ENCODE measurements at regions of chr6 and their contacts with region 1.

Region 1: DNA sequence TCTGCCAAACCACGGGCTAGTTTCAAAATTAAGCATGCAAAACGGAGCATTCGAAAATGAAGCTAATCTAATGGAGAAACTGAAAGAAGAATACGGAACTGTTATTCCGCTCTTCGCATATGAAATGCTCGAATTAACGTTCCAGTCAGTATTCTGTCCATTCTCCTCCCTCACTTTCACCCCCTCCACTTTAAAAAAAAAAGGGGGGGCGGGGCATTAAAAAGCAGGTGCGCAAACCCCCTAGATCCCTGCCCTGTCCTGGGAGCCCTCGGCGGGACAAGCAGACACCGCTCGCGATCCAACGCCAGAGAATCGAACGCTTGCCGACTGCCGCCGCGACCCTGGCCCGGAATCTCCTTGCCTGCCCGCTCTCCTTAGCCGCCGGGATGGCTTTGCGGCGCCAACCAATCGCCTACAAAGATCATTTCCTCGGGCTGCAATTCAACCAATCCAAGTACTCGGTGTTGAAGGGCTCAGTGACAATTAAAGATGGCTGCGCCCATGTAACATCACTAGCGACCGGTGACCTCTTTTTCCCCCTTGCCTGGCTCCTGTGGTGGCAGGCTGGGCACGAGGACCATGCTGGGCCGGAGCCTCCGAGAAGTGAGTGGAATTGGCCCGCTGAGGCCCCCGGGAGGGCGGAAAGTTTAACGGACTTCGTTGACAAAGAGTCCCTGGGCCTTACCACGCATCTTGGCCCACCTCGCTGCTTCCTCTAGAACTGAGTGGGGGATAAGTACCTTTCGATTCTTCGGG is at the starts of genes QRSL1 and RTN4IP1:
- DNase-seq: peak; percentile 88
- ATAC-seq: peak; percentile 89
- H3K4me3 ChIP-seq: peak within 1 kb of the TSS; percentile 95
- H3K27ac ChIP-seq: peak within 1 kb of the TSS; percentile 81
- H3K4me1 ChIP-seq: peaks cover 16% of the 10 kb centered on the region; the same call in 1 of the 2 replicates
- H3K27me3 ChIP-seq: no peaks in the 10 kb centered on the region
- CTCF ChIP-seq: no peak
- EP300 ChIP-seq: 0 out of 4 replicates have a peak, but pooled peaks of 1 of the 2 experiments have one; percentile 6
- POLR2A ChIP-seq: peak; percentile 81
- RAD21 ChIP-seq: no peak
- polyA plus RNA-seq, gene QRSL1: 11.9 to 15.1 TPM
- polyA plus RNA-seq, gene RTN4IP1: 15.8 to 17.0 TPM

Region 2: GRCh38 chr6:106411643-106412200 is 217.6 kb before region 1 on chr6:
- CTCF ChIA-PET with region 1: no interaction called
- POLR2A ChIA-PET with region 1: no interaction called
- RAD21 ChIA-PET with region 1: no interaction called
- SMC1A ChIA-PET with region 1: no interaction called
- in situ Hi-C with region 1: no loop called
- intact Hi-C with region 1: no loop called
- DNase-seq: no peak
- ATAC-seq: no peak
- H3K4me3 ChIP-seq: no peak overlapping the region
- H3K27ac ChIP-seq: no peak overlapping the region
- H3K4me1 ChIP-seq: no peaks in the 10 kb centered on the region
- H3K27me3 ChIP-seq: no peaks in the 10 kb centered on the region
- CTCF ChIP-seq: no peak
- EP300 ChIP-seq: no peak
- POLR2A ChIP-seq: no peak
- RAD21 ChIP-seq: no peak

Region 3: DNA sequence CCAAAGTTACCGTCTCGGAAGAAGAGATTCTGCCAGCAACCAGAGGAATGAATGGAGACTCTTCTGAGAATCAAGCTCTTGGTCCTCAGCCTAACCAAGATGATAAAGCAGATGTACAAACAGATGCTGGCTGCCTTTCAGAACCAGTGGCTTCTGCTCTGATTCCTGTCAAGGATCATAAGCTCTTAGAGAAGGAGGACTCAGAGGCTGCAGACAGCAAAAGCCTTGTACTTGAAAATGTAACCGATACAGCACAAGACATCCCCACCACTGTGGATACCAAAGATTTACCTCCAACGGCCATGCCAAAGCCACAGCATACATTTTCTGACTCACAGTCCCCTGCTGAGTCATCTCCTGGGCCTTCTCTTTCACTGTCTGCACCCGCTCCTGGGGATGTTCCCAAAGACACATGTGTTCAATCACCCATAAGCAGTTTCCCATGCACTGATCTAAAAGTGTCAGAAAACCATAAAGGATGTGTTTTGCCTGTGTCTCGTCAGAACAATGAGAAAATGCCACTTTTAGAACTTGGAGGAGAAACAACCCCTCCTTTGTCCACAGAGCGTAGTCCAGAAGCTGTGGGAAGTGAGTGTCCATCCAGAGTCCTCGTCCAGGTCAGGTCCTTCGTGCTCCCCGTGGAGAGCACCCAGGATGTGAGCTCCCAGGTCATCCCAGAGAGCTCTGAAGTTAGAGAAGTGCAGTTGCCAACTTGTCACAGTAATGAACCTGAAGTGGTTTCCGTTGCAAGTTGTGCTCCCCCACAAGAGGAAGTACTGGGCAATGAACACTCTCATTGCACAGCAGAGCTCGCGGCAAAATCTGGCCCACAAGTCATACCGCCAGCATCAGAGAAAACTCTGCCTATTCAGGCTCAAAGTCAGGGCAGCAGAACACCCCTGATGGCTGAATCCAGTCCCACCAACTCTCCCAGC is 109.6 kb before region 1 on chr6:
- CTCF ChIA-PET with region 1: no interaction called
- POLR2A ChIA-PET with region 1: interaction called, 4 read pairs
- RAD21 ChIA-PET with region 1: interaction called, 3 read pairs
- SMC1A ChIA-PET with region 1: no interaction called
- in situ Hi-C with region 1: no loop called
- intact Hi-C with region 1: loop called (anchors 2 kb)
- DNase-seq: peak; percentile 89
- ATAC-seq: peak; percentile 66
- H3K4me3 ChIP-seq: peak overlapping the region; percentile 73
- H3K27ac ChIP-seq: peak overlapping the region; percentile 93
- H3K4me1 ChIP-seq: no peaks in the 10 kb centered on the region
- H3K27me3 ChIP-seq: no peaks in the 10 kb centered on the region
- CTCF ChIP-seq: no peak
- EP300 ChIP-seq: peak; percentile 61 to 72
- POLR2A ChIP-seq: peak; percentile 78
- RAD21 ChIP-seq: no peak

Region 4: GRCh38 chr6:106614592-106615301 is 14.5 kb before region 1 on chr6:
- CTCF ChIA-PET with region 1: interaction called, 8 read pairs
- POLR2A ChIA-PET with region 1: interaction called, 4 read pairs
- RAD21 ChIA-PET with region 1: interaction called, 10 read pairs
- SMC1A ChIA-PET with region 1: interaction called, 18 read pairs
- in situ Hi-C with region 1: no loop called
- intact Hi-C with region 1: loop called (anchors 2 kb)
- DNase-seq: no peak
- ATAC-seq: no peak
- H3K4me3 ChIP-seq: no peak overlapping the region
- H3K27ac ChIP-seq: no peak overlapping the region
- H3K4me1 ChIP-seq: peaks cover 4% of the 10 kb centered on the region; the same call in 1 of the 2 replicates
- H3K27me3 ChIP-seq: no peaks in the 10 kb centered on the region
- CTCF ChIP-seq: no peak
- EP300 ChIP-seq: no peak
- POLR2A ChIP-seq: no peak
- RAD21 ChIP-seq: no peak

Region 5: DNA sequence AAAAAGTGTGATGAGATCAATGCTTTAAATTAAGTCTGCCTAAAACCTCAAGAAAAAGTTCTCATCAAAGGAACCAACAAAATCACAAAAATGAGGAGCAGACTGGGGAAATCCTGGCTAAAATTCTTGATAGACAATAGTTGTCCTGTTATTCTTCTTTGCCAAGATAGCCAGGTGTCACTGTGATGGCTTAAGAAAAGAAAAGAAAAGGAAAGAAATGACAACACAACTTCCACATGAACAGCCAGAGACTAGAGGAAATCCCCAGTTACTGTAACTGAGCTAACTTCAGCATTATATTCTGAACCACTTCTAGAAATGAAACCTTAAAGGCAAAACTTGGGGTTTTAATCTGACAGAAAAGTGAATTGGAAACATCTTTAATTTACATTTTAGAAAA is 215.6 kb after region 1 on chr6:
- CTCF ChIA-PET with region 1: interaction called, 3 read pairs
- POLR2A ChIA-PET with region 1: no interaction called
- RAD21 ChIA-PET with region 1: no interaction called
- SMC1A ChIA-PET with region 1: interaction called, 3 read pairs
- in situ Hi-C with region 1: no loop called
- intact Hi-C with region 1: loop called (anchors 5 kb)
- DNase-seq: peak; percentile 65
- ATAC-seq: peak; percentile 75
- H3K4me3 ChIP-seq: peak overlapping the region; percentile 27; the same call in 1 of the 2 replicates
- H3K27ac ChIP-seq: peak overlapping the region; percentile 96
- H3K4me1 ChIP-seq: peaks cover 44% of the 10 kb centered on the region
- H3K27me3 ChIP-seq: no peaks in the 10 kb centered on the region
- CTCF ChIP-seq: no peak
- EP300 ChIP-seq: peak; percentile 43 to 60; a peak in 2 of 4 replicates
- POLR2A ChIP-seq: no peak
- RAD21 ChIP-seq: no peak

Measured in GM12878 (cell line).